CD4-positive, alpha-beta memory T cell (primary cell): ENCODE measurements at regions of chr7 and their contacts with region 1.

Region 1: GRCh38 chr7:98400542-98401340 is at the start of gene BAIAP2L1:
- DNase-seq: peak; percentile 57 to 74 (median 73)
- H3K4me3 ChIP-seq: no peak within 1 kb of the TSS
- H3K4me3 Mint-ChIP-seq: peak within 1 kb of the TSS; percentile 58 to 76 (median 66)
- H3K27ac ChIP-seq: no peak within 1 kb of the TSS
- H3K27ac Mint-ChIP-seq: peak within 1 kb of the TSS in 3 of 7 donors; percentile 12 to 48 (median 19)
- H3K4me1 ChIP-seq: peaks cover 12% of the 10 kb centered on the region
- H3K4me1 Mint-ChIP-seq: peaks cover 0 to 9% (median 4%) of the 10 kb centered on the region in 4 donors
- H3K27me3 ChIP-seq: peaks cover 4% of the 10 kb centered on the region
- H3K27me3 Mint-ChIP-seq: peaks cover 7 to 11% of the 10 kb centered on the region in 2 donors
- total RNA-seq, gene BAIAP2L1: 0.36 to 0.38 TPM

Region 2: GRCh38 chr7:98021588-98022351 is 379.0 kb before region 1 on chr7:
- CTCF ChIA-PET with region 1: interaction called, 4 read pairs
- POLR2A ChIA-PET with region 1: no interaction called
- intact Hi-C with region 1: loop called (anchors 10 kb)
- DNase-seq: peak; percentile 61 to 69 (median 64)
- H3K4me3 ChIP-seq: no peak overlapping the region
- H3K4me3 Mint-ChIP-seq: no peak overlapping the region
- H3K27ac ChIP-seq: no peak overlapping the region
- H3K27ac Mint-ChIP-seq: peak overlapping the region in 2 of 7 donors; percentile 34 to 37
- H3K4me1 ChIP-seq: no peaks in the 10 kb centered on the region
- H3K4me1 Mint-ChIP-seq: peaks cover 0 to 5% (median 4%) of the 10 kb centered on the region in 4 donors
- H3K27me3 ChIP-seq: no peaks in the 10 kb centered on the region
- H3K27me3 Mint-ChIP-seq: peaks cover 2 to 13% of the 10 kb centered on the region in 2 donors

Region 3: DNA sequence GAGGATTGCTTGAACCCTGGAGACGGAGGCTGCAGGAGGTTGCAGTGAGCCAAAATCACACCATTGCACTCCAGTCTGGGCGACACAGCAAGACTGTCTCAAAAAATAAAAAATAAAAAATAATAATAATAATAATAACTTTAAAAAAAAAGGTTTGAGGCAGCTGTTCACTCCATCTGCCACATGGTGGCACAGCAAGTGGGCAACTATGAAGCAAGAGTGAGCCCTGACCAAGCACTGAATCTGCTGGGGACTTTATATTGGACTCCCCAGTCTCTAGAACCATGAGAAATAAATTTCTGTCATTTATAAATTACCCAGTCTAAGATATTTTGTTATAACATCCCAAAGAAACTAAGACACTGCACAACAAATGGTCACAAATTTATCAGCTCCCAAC is 133.9 kb before region 1 on chr7:
- CTCF ChIA-PET with region 1: no interaction called
- POLR2A ChIA-PET with region 1: no interaction called
- intact Hi-C with region 1: loop called (anchors 5 kb)
- DNase-seq: no peak
- H3K4me3 ChIP-seq: no peak overlapping the region
- H3K4me3 Mint-ChIP-seq: no peak overlapping the region
- H3K27ac ChIP-seq: no peak overlapping the region
- H3K27ac Mint-ChIP-seq: no peak overlapping the region
- H3K4me1 ChIP-seq: no peaks in the 10 kb centered on the region
- H3K4me1 Mint-ChIP-seq: peaks cover 0 to 7% (median 4%) of the 10 kb centered on the region in 4 donors
- H3K27me3 ChIP-seq: no peaks in the 10 kb centered on the region
- H3K27me3 Mint-ChIP-seq: no peaks in the 10 kb centered on the region